Right cardiac atrium (tissue), 5 donors: ENCODE measurements at regions of chr5 and their contacts with region 1.

Region 1: GRCh38 chr5:170791325-170791954 is 7.9 kb downstream of the GABRP start:
- DNase-seq: peak; percentile 59 to 83 (median 80)
- ATAC-seq: peak; percentile 68 to 71
- H3K4me3 ChIP-seq: no peak overlapping the region
- H3K27ac ChIP-seq: no peak overlapping the region
- H3K4me1 ChIP-seq: no peaks in the 10 kb centered on the region
- H3K27me3 ChIP-seq: no peaks in the 10 kb centered on the region

Region 2: GRCh38 chr5:170704417-170705192 is 86.8 kb before region 1 on chr5:
- intact Hi-C with region 1: no loop called
- DNase-seq: no peak
- ATAC-seq: no peak
- H3K4me3 ChIP-seq: no peak overlapping the region
- H3K27ac ChIP-seq: no peak overlapping the region
- H3K4me1 ChIP-seq: no peaks in the 10 kb centered on the region
- H3K27me3 ChIP-seq: no peaks in the 10 kb centered on the region

Region 3: DNA sequence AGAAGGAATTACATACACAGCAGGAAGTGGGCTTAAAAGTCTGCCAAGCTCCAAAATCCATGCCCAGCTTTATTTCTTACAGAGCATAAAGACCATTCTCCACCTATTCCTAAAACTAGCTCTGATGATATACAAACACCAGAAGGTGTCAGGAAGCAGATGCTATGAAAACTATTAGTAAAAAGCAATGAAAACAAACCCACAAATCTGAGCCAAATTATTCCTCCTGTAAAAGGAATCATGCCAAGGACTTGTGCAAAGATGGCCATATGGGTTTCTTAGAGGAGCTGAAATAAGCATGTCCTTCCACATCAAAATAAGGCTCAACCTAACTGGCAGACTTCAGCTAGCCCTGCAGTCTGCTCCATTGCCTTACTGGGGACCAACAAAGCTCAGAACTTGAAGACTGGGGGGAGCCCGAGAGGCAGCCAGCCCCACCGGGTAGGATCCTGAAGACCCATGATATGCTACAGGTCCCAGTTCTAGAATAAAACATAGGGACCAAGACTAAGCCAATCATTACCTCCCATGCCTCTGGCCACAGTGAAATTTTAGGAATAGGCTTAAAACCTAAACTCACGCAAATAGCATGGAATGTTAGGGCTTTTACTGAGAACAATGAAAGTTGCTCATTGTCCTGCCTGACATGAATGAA is 50.8 kb before region 1 on chr5:
- intact Hi-C with region 1: loop called (anchors 1 to 5 kb)
- DNase-seq: no peak
- ATAC-seq: no peak
- H3K4me3 ChIP-seq: no peak overlapping the region
- H3K27ac ChIP-seq: no peak overlapping the region
- H3K4me1 ChIP-seq: no peaks in the 10 kb centered on the region
- H3K27me3 ChIP-seq: no peaks in the 10 kb centered on the region

Region 4: GRCh38 chr5:170747851-170748250 is 43.6 kb before region 1 on chr5:
- intact Hi-C with region 1: loop called (anchors 1 to 5 kb)
- DNase-seq: peak in 1 of 3 donors; percentile 55
- ATAC-seq: no peak
- H3K4me3 ChIP-seq: no peak overlapping the region
- H3K27ac ChIP-seq: peak overlapping the region; percentile 63
- H3K4me1 ChIP-seq: peaks cover 3% of the 10 kb centered on the region
- H3K27me3 ChIP-seq: no peaks in the 10 kb centered on the region